B cell (primary cell): ENCODE measurements at regions of chr19 and their contacts with region 1.

Region 1: DNA sequence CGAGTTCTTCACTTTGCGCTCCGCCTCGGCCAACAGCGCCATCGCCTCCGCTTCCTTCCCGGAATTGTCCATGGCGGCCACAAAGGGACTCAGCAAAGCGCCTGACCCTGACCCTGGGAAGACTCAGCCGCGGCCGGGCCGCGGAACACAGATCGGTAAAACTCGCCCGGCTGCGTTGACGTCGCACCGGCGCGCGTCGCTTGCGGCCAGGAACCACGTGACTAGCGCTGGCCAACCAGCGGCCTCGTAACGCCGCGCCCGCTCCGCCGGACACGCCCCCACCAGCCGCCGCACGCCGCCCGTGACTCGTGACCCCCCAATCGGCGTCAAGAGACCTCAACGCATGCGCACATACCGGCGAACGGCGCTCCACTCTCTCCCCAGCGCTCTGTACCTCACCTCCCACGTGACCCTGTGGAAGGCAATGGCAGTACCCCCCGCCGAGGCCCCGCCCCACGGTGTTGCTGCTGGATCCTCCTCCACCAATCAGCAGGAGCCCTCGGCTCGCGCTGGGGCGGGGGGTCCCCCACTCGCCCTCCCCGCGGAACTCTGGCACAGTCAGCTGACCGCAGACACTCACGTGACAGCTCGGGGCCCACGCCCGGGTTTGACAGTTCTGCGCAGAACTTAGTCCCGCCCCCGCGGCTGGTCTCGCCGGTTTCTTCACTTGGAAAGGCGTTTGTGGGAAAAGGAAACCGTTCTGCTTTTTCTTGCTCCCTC is at the start of gene NAPA:
- DNase-seq: peak; percentile 100
- ATAC-seq: peak; percentile 93
- H3K4me3 ChIP-seq: peak within 1 kb of the TSS; percentile 72 to 100 (median 83)
- H3K4me3 Mint-ChIP-seq: peak within 1 kb of the TSS; percentile 97
- H3K27ac ChIP-seq: peak within 1 kb of the TSS; percentile 96 to 99
- H3K27ac Mint-ChIP-seq: peak within 1 kb of the TSS; percentile 97
- H3K4me1 ChIP-seq: peaks cover 58 to 66% of the 10 kb centered on the region in 2 donors
- H3K4me1 Mint-ChIP-seq: peaks cover 76% of the 10 kb centered on the region
- H3K27me3 ChIP-seq: peaks cover 0 to 4% (median under 1%) of the 10 kb centered on the region in 4 experiments
- H3K27me3 Mint-ChIP-seq: no peaks in the 10 kb centered on the region
- CTCF ChIP-seq: no peak
- total RNA-seq, gene NAPA: 65.8 and 66.8 TPM in 2 replicates

Region 2: DNA sequence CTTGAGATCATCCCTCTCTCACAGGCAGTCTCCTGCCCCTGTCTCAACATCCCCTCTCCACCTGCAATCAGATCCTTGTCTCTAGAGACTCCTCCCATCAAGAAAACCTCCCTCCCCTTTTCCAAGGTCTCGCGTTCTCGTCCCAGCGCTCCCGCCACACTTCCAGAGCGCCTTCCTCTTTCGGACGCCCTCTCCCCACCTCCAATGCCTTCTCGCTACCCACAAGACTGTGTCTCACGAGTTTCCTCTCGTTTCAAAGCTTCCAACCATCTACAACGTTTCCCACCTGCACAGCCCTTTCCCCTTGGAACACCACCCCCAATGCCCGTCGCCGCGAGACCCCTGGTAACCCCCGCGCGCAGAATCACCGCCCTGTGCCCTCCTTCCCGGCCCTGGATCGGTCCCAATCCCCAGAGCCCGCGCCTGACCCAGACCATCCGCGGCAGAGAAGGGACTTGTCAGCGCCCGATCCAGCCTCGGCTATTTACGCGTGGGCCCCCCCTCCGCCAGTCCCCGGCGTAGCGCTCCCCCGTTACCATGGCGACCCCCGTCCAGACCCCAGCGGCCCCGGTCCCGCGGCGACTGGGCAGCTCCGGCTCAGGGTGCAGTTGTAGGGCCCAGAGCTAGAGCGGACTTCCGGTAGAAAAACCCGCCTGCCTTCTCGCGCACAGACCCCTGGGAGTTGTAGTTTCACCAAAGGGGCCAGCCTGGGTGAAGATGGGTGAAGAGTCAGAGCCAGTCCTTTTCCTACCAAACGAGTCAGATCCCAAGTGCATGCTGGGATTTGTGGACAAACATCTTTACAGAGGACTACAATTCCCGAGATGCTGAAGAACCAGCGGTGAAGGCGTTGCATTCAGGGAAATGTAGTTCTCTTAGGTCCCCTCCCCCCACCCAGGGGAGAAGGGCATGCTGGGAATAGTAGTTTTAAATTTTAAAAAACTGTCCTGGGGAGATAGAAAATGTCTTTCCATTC is 664.5 kb before region 1 on chr19 and contains the start of gene AP2S1:
- CTCF ChIA-PET with region 1: no interaction called
- POLR2A ChIA-PET with region 1: no interaction called
- intact Hi-C with region 1: loop called (anchors 10 kb)
- DNase-seq: peak; percentile 95
- ATAC-seq: peak; percentile 93
- H3K4me3 ChIP-seq: peak within 1 kb of the TSS; percentile 59 to 89 (median 82)
- H3K4me3 Mint-ChIP-seq: peak within 1 kb of the TSS; percentile 98
- H3K27ac ChIP-seq: peak within 1 kb of the TSS; percentile 58 to 81
- H3K27ac Mint-ChIP-seq: peak within 1 kb of the TSS; percentile 86
- H3K4me1 ChIP-seq: peaks cover 17 to 24% of the 10 kb centered on the region in 2 donors
- H3K4me1 Mint-ChIP-seq: peaks cover 32% of the 10 kb centered on the region
- H3K27me3 ChIP-seq: no peaks in the 10 kb centered on the region
- H3K27me3 Mint-ChIP-seq: no peaks in the 10 kb centered on the region
- CTCF ChIP-seq: no peak
- total RNA-seq, gene AP2S1: 47.2 and 49.3 TPM in 2 replicates

Region 3: GRCh38 chr19:47348819-47349795 is 165.9 kb before region 1 on chr19 and contains the start of gene DHX34:
- CTCF ChIA-PET with region 1: interaction called, 3 read pairs
- POLR2A ChIA-PET with region 1: no interaction called
- intact Hi-C with region 1: loop called (anchors 1 kb)
- DNase-seq: peak; percentile 100
- ATAC-seq: peak; percentile 98
- H3K4me3 ChIP-seq: peak within 1 kb of the TSS; percentile 83 to 98 (median 91)
- H3K4me3 Mint-ChIP-seq: peak within 1 kb of the TSS; percentile 99
- H3K27ac ChIP-seq: peak within 1 kb of the TSS; percentile 52 to 86
- H3K27ac Mint-ChIP-seq: peak within 1 kb of the TSS; percentile 92
- H3K4me1 ChIP-seq: peaks cover 10 to 16% of the 10 kb centered on the region in 2 donors
- H3K4me1 Mint-ChIP-seq: peaks cover 37% of the 10 kb centered on the region
- H3K27me3 ChIP-seq: no peaks in the 10 kb centered on the region
- H3K27me3 Mint-ChIP-seq: no peaks in the 10 kb centered on the region
- CTCF ChIP-seq: peak; percentile 88
- total RNA-seq, gene DHX34: 24.3 and 25.1 TPM in 2 replicates

Region 4: GRCh38 chr19:47483800-47484690 is 31.0 kb before region 1 on chr19 and contains the start of gene KPTN:
- CTCF ChIA-PET with region 1: interaction called, 22 read pairs
- POLR2A ChIA-PET with region 1: interaction called, 14 read pairs
- intact Hi-C with region 1: loop called (anchors 1 kb)
- DNase-seq: peak; percentile 95
- ATAC-seq: peak; percentile 85
- H3K4me3 ChIP-seq: peak within 1 kb of the TSS; percentile 62 to 84 (median 81)
- H3K4me3 Mint-ChIP-seq: peak within 1 kb of the TSS; percentile 96
- H3K27ac ChIP-seq: peak within 1 kb of the TSS; percentile 79 to 86
- H3K27ac Mint-ChIP-seq: peak within 1 kb of the TSS; percentile 99
- H3K4me1 ChIP-seq: peaks cover 33 to 44% of the 10 kb centered on the region in 2 donors
- H3K4me1 Mint-ChIP-seq: peaks cover 41% of the 10 kb centered on the region
- H3K27me3 ChIP-seq: no peaks in the 10 kb centered on the region
- H3K27me3 Mint-ChIP-seq: no peaks in the 10 kb centered on the region
- CTCF ChIP-seq: peak; percentile 84
- total RNA-seq, gene KPTN: 8.1 and 11.7 TPM in 2 replicates

Region 5: DNA sequence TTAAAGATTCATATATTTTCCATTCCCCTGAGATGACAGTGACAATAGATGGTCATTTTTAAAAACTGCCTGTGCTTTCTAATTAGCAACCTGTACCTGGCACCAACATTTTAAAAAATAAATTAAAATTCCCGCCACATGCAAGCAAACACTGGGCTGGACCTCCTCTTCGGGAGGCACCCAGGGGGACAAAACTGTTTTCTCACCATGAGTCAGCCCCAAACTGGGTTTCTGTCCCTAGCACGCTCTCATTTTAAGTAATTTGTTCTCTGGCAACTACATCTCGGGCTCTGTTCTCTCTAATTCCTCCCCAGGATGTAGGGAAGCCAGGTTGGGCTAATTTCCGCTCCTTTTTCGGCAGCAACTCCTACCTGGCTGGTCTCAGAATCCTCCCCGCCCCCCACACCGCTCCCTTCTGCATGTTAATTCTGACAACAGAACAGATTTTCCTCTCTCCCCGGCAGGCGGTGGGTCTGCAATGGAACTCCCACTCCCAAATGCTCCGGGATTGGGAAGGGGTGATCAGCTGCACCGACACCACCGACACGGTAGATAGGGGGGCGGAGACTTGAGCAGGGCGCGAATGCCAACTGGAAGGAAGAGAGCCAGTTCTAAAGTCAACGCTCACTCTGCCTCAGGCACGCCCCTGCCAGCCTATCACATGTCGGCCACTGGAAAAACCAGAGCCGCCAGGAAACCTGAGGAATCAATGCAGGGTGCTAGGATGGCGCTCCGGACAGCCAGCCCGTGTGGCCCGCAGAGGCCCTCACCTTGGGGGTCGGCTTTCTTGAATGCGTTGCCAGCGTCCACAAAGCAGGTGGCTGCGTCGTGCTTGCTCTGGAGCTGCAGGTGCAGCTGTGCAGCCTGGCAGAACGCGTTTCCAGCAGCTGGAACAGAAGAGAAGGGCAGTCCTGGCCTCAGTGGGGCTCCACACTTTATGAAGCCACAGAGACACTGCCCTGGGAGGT is 14.9 kb before region 1 on chr19:
- CTCF ChIA-PET with region 1: no interaction called
- POLR2A ChIA-PET with region 1: no interaction called
- intact Hi-C with region 1: no loop called
- DNase-seq: no peak
- ATAC-seq: no peak
- H3K4me3 ChIP-seq: no peak overlapping the region
- H3K4me3 Mint-ChIP-seq: no peak overlapping the region
- H3K27ac ChIP-seq: no peak overlapping the region
- H3K27ac Mint-ChIP-seq: no peak overlapping the region
- H3K4me1 ChIP-seq: no peaks in the 10 kb centered on the region
- H3K4me1 Mint-ChIP-seq: no peaks in the 10 kb centered on the region
- H3K27me3 ChIP-seq: no peaks in the 10 kb centered on the region
- H3K27me3 Mint-ChIP-seq: no peaks in the 10 kb centered on the region
- CTCF ChIP-seq: no peak

Region 6: GRCh38 chr19:47600246-47601179 is 85.5 kb after region 1 on chr19:
- CTCF ChIA-PET with region 1: interaction called, 16 read pairs
- POLR2A ChIA-PET with region 1: interaction called, 4 read pairs
- intact Hi-C with region 1: loop called (anchors 1 kb)
- DNase-seq: peak; percentile 99
- ATAC-seq: peak; percentile 96
- H3K4me3 ChIP-seq: peak overlapping the region; percentile 63 to 79 (median 71)
- H3K4me3 Mint-ChIP-seq: peak overlapping the region; percentile 80
- H3K27ac ChIP-seq: peak overlapping the region; percentile 62 to 83
- H3K27ac Mint-ChIP-seq: peak overlapping the region; percentile 70
- H3K4me1 ChIP-seq: peaks cover 12 to 18% of the 10 kb centered on the region in 2 donors
- H3K4me1 Mint-ChIP-seq: peaks cover 11% of the 10 kb centered on the region
- H3K27me3 ChIP-seq: peaks cover 0 to 28% (median 3%) of the 10 kb centered on the region in 4 experiments
- H3K27me3 Mint-ChIP-seq: peaks cover 21% of the 10 kb centered on the region
- CTCF ChIP-seq: no peak

Region 7: DNA sequence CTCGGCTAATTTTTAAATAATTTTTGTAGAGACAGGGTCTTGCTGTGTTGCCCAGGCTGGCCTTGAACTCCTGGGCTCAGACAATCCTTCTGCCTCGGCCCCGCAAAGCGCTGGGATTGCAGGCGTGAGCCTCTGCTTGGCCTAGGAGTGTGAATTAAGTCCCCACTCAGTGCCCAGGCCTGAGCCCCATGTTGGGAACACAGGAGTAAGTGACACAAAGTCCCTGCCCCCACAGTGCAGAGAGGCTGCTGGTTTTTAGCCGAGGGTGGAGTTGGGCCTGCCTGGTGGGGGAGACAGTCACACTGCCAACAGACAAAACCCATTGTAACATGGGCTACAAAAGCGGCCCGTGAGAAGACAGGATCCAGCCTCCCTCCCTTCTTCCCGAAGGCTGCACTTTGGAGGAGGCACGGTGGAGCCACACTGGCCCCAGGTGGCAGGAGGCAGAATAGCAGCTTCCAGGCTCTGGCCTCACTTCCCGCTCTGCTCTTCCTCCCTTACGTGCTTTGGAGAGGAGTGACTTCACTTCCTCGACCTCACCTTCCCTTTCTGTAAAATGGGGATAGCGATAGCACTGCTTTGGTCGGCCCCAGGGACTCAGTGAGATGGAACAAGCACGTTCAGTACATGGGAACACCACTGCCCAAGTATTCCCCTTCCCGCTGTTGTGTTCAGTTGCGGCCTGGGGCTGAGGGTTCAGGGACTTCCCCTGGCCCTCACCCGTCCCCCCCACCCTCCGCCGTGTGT is 183.0 kb after region 1 on chr19:
- CTCF ChIA-PET with region 1: interaction called, 3 read pairs
- POLR2A ChIA-PET with region 1: no interaction called
- intact Hi-C with region 1: loop called (anchors 5 kb)
- DNase-seq: peak; percentile 70
- ATAC-seq: peak; percentile 60
- H3K4me3 ChIP-seq: no peak overlapping the region
- H3K4me3 Mint-ChIP-seq: no peak overlapping the region
- H3K27ac ChIP-seq: no peak overlapping the region
- H3K27ac Mint-ChIP-seq: no peak overlapping the region
- H3K4me1 ChIP-seq: no peaks in the 10 kb centered on the region
- H3K4me1 Mint-ChIP-seq: no peaks in the 10 kb centered on the region
- H3K27me3 ChIP-seq: no peaks in the 10 kb centered on the region
- H3K27me3 Mint-ChIP-seq: no peaks in the 10 kb centered on the region
- CTCF ChIP-seq: peak; percentile 84

Region 8: GRCh38 chr19:48255376-48256303 is 740.6 kb after region 1 on chr19 and contains the start of gene CARD8:
- CTCF ChIA-PET with region 1: no interaction called
- POLR2A ChIA-PET with region 1: no interaction called
- intact Hi-C with region 1: loop called (anchors 5 kb)
- DNase-seq: peak; percentile 94
- ATAC-seq: peak; percentile 81
- H3K4me3 ChIP-seq: peak within 1 kb of the TSS; percentile 75 to 99 (median 96)
- H3K4me3 Mint-ChIP-seq: peak within 1 kb of the TSS; percentile 100
- H3K27ac ChIP-seq: peak within 1 kb of the TSS; percentile 92 to 93
- H3K27ac Mint-ChIP-seq: peak within 1 kb of the TSS; percentile 99
- H3K4me1 ChIP-seq: peaks cover 37 to 49% of the 10 kb centered on the region in 2 donors
- H3K4me1 Mint-ChIP-seq: peaks cover 61% of the 10 kb centered on the region
- H3K27me3 ChIP-seq: no peaks in the 10 kb centered on the region
- H3K27me3 Mint-ChIP-seq: no peaks in the 10 kb centered on the region
- CTCF ChIP-seq: no peak
- total RNA-seq, gene CARD8: 161 and 164 TPM in 2 replicates